ENCODE measurements at regions of chr5 and their contacts with region 1.

Region 1: GRCh38 chr5:151126199-151126645 is 31.4 kb downstream of the ANXA6 start:
- DNase-seq: peak; percentile 75
- H3K4me3 ChIP-seq: no peak overlapping the region
- H3K27ac ChIP-seq: no peak overlapping the region
- H3K4me1 ChIP-seq: no peaks in the 10 kb centered on the region
- H3K27me3 ChIP-seq: no peaks in the 10 kb centered on the region
- CTCF ChIP-seq: peak; percentile 71

Region 2: DNA sequence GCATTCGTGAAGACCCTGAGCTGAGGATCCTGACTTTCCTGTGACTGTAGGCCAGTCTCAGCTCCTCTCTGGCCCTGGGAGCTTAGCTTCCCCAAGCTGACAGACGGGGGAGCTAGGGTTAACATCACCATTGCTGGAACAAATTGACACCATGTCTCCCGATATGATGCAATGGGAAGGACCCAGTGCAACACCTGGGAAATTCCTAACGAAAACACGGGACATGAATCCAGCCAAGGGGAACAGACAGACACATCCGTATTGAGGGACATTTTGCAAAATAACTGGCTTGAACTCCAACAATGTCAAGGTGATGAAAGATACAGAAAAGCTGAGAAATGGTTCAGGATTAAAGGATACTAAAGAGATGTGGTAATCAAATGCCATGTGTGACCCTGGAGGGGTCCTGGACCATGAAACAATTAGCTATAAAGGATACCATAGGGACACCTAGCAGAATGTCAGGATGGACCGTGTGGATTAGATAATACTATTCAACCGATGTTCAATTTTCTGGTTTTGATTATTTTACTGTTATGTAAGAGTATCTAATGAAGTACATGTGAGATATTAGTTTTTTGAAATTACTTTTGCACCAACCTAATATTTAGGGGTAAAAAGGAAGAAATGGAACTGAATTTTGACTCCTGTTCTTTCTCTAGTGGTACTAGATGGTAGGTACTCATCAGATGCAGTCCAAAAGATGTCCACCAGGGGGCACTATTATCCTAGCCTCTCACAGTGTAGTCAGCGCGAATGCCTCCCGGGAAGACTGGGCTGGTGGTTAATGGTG is 565.6 kb before region 1 on chr5:
- intact Hi-C with region 1: no loop called
- DNase-seq: peak; percentile 97
- H3K4me3 ChIP-seq: no peak overlapping the region
- H3K27ac ChIP-seq: no peak overlapping the region
- H3K4me1 ChIP-seq: no peaks in the 10 kb centered on the region
- H3K27me3 ChIP-seq: no peaks in the 10 kb centered on the region
- CTCF ChIP-seq: peak; percentile 89

Region 3: GRCh38 chr5:151164686-151165392 is 38.6 kb after region 1 on chr5:
- intact Hi-C with region 1: loop called (anchors 2 kb)
- DNase-seq: peak; percentile 82
- H3K4me3 ChIP-seq: no peak overlapping the region
- H3K27ac ChIP-seq: no peak overlapping the region
- H3K4me1 ChIP-seq: no peaks in the 10 kb centered on the region
- H3K27me3 ChIP-seq: no peaks in the 10 kb centered on the region
- CTCF ChIP-seq: peak; percentile 91

Region 4: DNA sequence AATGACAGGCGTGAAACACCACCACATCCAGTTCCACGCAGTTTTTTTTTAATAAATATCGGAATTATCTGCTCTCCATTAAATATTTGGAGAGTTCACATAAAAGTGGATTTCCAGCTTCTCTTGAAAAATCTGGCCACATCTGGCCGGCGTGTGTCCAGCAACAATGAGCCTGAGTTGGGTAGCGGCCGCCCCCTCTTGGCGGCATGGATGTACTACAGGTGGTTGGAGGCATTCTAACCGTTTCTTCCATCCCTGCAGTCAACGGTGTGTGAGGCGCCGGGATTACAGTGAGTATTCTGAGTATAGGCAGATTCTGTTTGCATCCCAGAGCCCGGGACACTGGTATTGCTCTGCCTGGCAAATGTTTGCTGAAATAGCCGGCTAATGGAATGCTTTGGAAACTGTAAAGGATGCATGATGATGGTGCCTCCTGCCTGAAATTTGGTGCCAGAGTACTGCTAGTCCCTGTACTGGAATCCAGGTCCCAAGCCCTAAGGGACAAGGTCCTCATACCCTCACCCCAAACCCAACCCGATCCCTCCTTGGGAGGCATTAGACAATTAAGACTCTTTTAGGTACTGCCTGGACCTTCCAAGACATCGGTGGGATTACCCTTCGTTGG is 113.1 kb after region 1 on chr5:
- intact Hi-C with region 1: loop called (anchors 5 kb)
- DNase-seq: peak; percentile 53
- H3K4me3 ChIP-seq: no peak overlapping the region
- H3K27ac ChIP-seq: peak overlapping the region; percentile 5
- H3K4me1 ChIP-seq: no peaks in the 10 kb centered on the region
- H3K27me3 ChIP-seq: no peaks in the 10 kb centered on the region
- CTCF ChIP-seq: peak; percentile 86

Measured in colonic mucosa (tissue), 4 donors.